ENCODE measurements at regions of chr13 and their contacts with region 1.

Region 1: GRCh38 chr13:52921194-52921593 is 72.8 kb upstream of the PCDH8 start:
- H3K4me3 Mint-ChIP-seq: no peak overlapping the region
- H3K27ac Mint-ChIP-seq: peak overlapping the region; percentile 59
- H3K4me1 Mint-ChIP-seq: peaks cover 36% of the 10 kb centered on the region
- H3K27me3 Mint-ChIP-seq: peaks cover 31% of the 10 kb centered on the region

Region 2: DNA sequence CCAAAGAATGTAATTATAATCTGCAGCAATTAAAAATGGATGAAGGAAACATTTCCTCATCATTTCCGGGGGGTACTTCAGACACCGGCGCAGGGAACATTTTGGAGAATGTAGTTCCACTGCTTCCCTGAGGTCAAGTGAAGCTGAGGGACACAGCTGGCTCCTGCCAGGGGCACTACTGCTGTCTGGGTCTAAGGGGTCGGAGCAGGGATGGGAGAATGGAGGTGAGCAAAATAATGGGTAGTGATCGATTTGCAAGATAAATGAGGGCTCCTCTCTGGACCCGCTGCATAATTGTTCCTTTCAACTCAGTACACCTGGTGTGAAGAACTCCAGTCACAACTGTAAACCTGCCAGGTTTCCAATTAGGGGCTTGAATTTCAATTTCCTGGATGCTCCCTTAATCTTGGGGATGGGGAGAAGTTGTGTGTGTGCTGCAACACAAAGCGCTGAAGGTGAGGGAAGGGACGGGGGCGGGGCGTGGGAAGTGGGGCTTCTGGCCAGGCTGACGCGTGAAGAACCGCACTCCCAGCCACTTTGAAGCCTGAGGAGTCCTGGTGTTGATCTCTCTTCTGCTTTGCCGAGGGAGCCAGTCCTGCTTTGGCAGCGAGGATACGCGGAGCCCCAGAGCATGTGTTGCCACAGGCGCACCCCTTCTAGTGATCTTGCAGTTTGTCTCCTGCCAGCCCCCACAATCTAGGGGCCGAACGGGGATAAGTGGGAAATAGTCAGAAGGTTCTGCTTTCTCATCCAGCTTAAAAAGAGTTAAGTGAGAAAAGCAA is 14.9 kb before region 1 on chr13:
- intact Hi-C with region 1: loop called (anchors 1 kb)
- H3K4me3 Mint-ChIP-seq: no peak overlapping the region
- H3K27ac Mint-ChIP-seq: no peak overlapping the region
- H3K4me1 Mint-ChIP-seq: peaks cover 13% of the 10 kb centered on the region
- H3K27me3 Mint-ChIP-seq: peaks cover 38% of the 10 kb centered on the region

Measured in dendritic cell treated with granulocyte-macrophage colony-stimulating factor and Interleukin-4, amounts not matched to agents 40 ng/mL and 50 ng/mL, for 4 days (primary cell).